Endothelial cell of umbilical vein (primary cell): ENCODE measurements at regions of chr14 and their contacts with region 1.

Region 1: GRCh38 chr14:74671789-74672188 is 41.1 kb downstream of the AREL1 start:
- DNase-seq: peak; percentile 85
- H3K4me3 ChIP-seq: no peak overlapping the region
- H3K27ac ChIP-seq: peak overlapping the region; percentile 89
- H3K4me1 ChIP-seq: peaks cover 43% of the 10 kb centered on the region
- H3K27me3 ChIP-seq: no peaks in the 10 kb centered on the region
- CTCF ChIP-seq: no peak
- POLR2A ChIP-seq: no peak

Region 2: DNA sequence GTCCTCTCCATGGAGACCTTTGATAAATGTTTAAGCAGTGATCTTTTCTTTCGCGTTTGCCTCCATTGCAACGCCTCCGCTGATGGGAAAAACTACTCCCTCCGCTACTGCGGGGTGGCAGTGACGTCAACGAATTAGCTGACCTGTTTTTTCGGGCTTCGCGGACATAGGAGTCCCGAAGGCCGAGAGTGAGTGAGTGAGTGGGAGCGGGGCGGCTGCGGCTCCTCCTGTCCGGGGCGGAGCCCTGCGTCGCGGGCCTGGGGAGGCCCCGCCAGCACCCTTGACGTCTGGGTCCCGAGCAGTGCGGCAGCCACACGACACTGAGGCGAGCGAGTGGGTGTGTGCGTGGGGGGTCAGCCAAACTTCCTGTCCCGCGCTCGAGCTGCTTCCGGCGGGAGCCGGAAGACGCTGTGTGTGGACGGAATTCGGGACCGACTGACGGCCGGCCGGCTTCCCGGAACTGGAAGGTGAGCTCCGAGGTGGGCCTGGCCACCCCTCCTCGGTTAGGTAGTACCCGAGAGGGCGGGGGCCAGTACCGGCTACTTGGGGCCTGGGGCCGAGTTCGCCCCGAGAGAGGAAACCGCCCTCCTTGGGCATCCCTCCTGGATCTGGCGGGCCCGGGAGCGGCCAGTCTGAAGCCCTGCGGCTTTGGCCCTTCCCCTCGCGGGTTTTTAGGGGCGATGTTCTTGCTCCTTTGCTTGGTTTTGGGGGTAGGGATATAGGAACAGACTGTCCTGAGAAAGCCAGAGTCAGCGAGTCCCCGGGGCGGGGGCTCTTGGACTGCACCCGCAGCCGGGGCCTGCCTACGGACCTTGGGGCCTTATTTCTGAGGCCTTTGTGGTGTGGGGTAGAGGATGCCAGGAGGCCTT is 785.1 kb before region 1 on chr14 and contains the start of gene ZNF410:
- CTCF ChIA-PET with region 1: no interaction called
- POLR2A ChIA-PET with region 1: no interaction called
- dilution Hi-C with region 1: no loop called
- intact Hi-C with region 1: no loop called
- DNase-seq: peak; percentile 93
- H3K4me3 ChIP-seq: peak within 1 kb of the TSS; percentile 60 to 87 (median 73)
- H3K27ac ChIP-seq: peak within 1 kb of the TSS; percentile 90
- H3K4me1 ChIP-seq: peaks cover 18% of the 10 kb centered on the region
- H3K27me3 ChIP-seq: no peaks in the 10 kb centered on the region
- CTCF ChIP-seq: no peak
- POLR2A ChIP-seq: peak; percentile 45
- total RNA-seq, gene ZNF410: 39.2 and 45.0 TPM in 2 replicates

Region 3: DNA sequence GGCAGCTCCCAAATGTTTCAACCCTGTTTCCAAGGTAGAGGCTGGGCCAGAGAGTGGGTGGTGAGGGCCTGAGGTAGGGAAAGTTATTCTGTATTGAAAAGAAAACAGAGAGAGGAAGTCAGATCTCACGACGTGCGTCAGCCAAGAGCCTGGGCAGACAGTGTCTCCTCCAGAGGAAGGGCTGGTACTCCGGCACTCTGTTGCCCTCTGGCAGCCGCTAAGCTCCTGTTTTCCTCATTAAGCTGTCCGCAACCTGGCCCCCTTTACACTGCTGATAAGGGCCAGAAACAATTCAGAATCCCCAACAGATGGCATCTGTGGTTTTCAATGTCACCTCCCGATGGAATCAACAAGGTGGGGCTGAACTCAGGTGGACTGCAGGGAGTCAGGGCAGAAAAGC is 33.7 kb before region 1 on chr14:
- CTCF ChIA-PET with region 1: interaction called, 10 read pairs
- POLR2A ChIA-PET with region 1: no interaction called
- dilution Hi-C with region 1: no loop called
- intact Hi-C with region 1: no loop called
- DNase-seq: peak; percentile 83
- H3K4me3 ChIP-seq: no peak overlapping the region
- H3K27ac ChIP-seq: peak overlapping the region; percentile 88
- H3K4me1 ChIP-seq: peaks cover 20% of the 10 kb centered on the region
- H3K27me3 ChIP-seq: no peaks in the 10 kb centered on the region
- CTCF ChIP-seq: peak; percentile 14 to 26
- POLR2A ChIP-seq: peak; percentile 35

Region 4: DNA sequence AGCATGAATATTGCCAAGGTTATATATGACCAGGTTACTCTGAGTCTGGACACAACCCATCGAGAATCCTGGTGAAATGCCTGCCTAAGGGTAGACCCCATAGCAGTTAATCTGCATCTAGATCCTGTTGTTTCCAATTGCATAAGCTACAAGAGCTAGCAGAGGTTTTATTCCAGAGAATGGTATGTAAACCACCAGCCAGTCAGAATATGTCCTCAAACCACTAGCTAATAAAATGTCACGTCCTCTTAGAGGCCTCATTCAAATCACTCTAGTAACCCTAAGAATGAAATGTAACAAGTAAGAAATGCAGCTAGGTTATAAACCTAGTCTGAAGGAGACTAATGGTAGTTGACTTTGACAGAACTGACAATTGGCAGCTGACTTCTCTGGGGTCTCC is 82.4 kb after region 1 on chr14:
- CTCF ChIA-PET with region 1: no interaction called
- POLR2A ChIA-PET with region 1: no interaction called
- dilution Hi-C with region 1: no loop called
- intact Hi-C with region 1: no loop called
- DNase-seq: no peak
- H3K4me3 ChIP-seq: no peak overlapping the region
- H3K27ac ChIP-seq: no peak overlapping the region
- H3K4me1 ChIP-seq: no peaks in the 10 kb centered on the region
- H3K27me3 ChIP-seq: no peaks in the 10 kb centered on the region
- CTCF ChIP-seq: no peak
- POLR2A ChIP-seq: no peak

Region 5: GRCh38 chr14:75411214-75411540 is 739.4 kb after region 1 on chr14:
- CTCF ChIA-PET with region 1: no interaction called
- POLR2A ChIA-PET with region 1: no interaction called
- dilution Hi-C with region 1: no loop called
- intact Hi-C with region 1: no loop called
- DNase-seq: no peak
- H3K4me3 ChIP-seq: no peak overlapping the region
- H3K27ac ChIP-seq: no peak overlapping the region
- H3K4me1 ChIP-seq: no peaks in the 10 kb centered on the region
- H3K27me3 ChIP-seq: peaks cover under 1 to 5% of the 10 kb centered on the region in 2 experiments
- CTCF ChIP-seq: no peak
- POLR2A ChIP-seq: no peak